G401 (cell line): ENCODE measurements at regions of chr12 and their contacts with region 1.

Region 1: DNA sequence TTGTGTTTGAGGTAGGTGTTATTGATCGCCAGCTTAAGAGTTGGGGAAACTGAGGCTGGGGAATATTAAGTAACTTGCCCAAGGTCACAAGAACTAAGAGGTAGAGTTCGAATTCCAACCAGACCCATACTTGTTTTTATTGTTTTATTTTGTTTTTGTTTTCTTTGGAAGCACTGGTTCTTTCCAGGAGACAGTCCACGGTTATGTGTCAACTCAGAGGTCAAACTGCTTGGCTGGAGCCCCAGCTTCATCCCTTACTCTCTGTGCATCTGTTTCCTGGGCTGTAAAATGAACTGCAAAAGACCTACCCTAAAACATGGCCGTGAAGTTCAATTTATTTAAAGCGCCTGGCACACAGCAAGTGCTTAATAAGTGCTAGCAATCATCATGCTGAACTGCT is 74.4 kb upstream of the MAP1LC3B2 start:
- DNase-seq: no peak

Region 2: GRCh38 chr12:116568203-116568602 is 83.4 kb after region 1 on chr12:
- in situ Hi-C with region 1: loop called (anchors 5 kb)
- DNase-seq: no peak